ENCODE measurements at regions of chr2 and their contacts with region 1.

Region 1: GRCh38 chr2:230712443-230713330 is at the start of gene CAB39:
- DNase-seq: peak; percentile 93 to 95
- ATAC-seq: peak; percentile 96
- H3K4me3 ChIP-seq: peak within 1 kb of the TSS; percentile 82 to 98
- H3K27ac ChIP-seq: peak within 1 kb of the TSS; percentile 68 to 98
- H3K4me1 ChIP-seq: peaks cover 0 to 1% of the 10 kb centered on the region in 2 donors
- H3K27me3 ChIP-seq: no peaks in the 10 kb centered on the region
- total RNA-seq, gene CAB39: 80.4 to 81.1 TPM

Region 2: GRCh38 chr2:230447455-230448451 is 264.9 kb before region 1 on chr2:
- intact Hi-C with region 1: no loop called
- DNase-seq: no peak
- ATAC-seq: no peak
- H3K4me3 ChIP-seq: no peak overlapping the region
- H3K27ac ChIP-seq: no peak overlapping the region
- H3K4me1 ChIP-seq: peaks cover 0 to 2% of the 10 kb centered on the region in 2 donors
- H3K27me3 ChIP-seq: no peaks in the 10 kb centered on the region

Region 3: DNA sequence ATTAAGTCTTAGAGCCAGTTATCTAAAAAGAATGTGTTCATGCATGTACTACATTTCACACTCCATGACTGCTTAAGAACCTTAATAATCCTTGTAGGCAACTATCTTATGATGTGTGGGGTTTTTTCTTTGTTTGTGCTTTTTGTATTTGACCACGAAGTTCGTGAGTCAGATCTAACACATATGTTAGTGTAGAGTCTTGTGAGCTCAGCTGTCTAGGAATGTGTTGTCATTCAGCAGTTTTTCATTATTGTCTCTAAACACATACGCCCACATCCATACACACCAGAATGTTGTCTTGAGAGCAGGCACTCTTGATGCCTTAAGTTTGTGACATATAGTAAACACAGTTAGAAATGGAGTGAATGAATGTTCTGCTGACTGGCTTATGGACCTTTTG is 38.4 kb after region 1 on chr2:
- intact Hi-C with region 1: loop called (anchors 5 kb)
- DNase-seq: no peak
- ATAC-seq: no peak
- H3K4me3 ChIP-seq: no peak overlapping the region
- H3K27ac ChIP-seq: no peak overlapping the region
- H3K4me1 ChIP-seq: peaks cover 1 to 8% of the 10 kb centered on the region in 2 donors
- H3K27me3 ChIP-seq: no peaks in the 10 kb centered on the region

Region 4: GRCh38 chr2:230758566-230759480 is 46.1 kb after region 1 on chr2:
- intact Hi-C with region 1: loop called (anchors 5 kb)
- DNase-seq: no peak
- ATAC-seq: no peak
- H3K4me3 ChIP-seq: no peak overlapping the region
- H3K27ac ChIP-seq: peak overlapping the region in 1 of 2 donors; percentile 41
- H3K4me1 ChIP-seq: peaks cover 3 to 8% of the 10 kb centered on the region in 2 donors
- H3K27me3 ChIP-seq: no peaks in the 10 kb centered on the region

Region 5: DNA sequence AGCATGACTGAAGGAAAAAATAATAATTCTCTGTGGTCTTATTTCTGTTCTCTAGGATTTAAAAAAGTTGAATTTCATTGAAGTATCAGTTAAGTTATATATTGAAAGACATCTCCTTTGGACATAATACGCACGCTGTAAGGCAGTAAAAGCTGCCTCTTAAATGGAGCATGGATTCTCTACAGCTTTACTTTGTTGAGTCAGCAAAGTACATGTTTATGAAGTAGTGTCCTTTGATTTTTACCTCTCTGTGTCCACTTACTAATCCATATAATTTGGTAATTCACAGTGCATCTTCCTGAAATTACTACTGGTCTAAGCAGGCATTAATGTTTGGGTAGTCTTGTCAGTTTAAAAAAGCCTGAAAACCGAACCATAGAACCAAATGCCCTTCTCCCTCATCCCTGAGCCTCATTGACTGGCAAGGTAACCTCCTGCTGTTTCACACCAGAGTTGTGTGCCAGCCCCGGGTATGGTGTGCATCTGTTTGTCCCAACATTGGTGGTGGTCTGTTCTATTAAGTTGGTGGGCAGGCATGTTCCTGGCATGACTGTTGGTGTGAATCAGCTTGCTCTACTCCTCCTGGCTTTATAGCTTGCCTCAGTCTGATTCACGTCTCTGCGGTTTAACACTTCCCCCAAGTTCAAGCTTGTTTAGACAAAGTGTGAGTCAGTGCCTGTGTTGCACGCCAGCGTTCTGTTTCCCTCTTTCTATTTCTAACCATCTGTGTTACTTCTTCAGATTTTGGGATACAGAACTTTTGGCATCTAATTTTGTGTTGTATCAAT is 81.1 kb after region 1 on chr2:
- intact Hi-C with region 1: loop called (anchors 2 to 5 kb)
- DNase-seq: peak; percentile 86 to 88
- ATAC-seq: peak; percentile 90
- H3K4me3 ChIP-seq: no peak overlapping the region
- H3K27ac ChIP-seq: peak overlapping the region; percentile 91 to 98
- H3K4me1 ChIP-seq: peaks cover 0 to 10% of the 10 kb centered on the region in 2 donors
- H3K27me3 ChIP-seq: no peaks in the 10 kb centered on the region

Region 6: GRCh38 chr2:230798769-230799399 is 86.2 kb after region 1 on chr2:
- intact Hi-C with region 1: loop called (anchors 2 to 5 kb)
- DNase-seq: no peak
- ATAC-seq: peak; percentile 65
- H3K4me3 ChIP-seq: no peak overlapping the region
- H3K27ac ChIP-seq: no peak overlapping the region
- H3K4me1 ChIP-seq: peaks cover 0 to 6% of the 10 kb centered on the region in 2 donors
- H3K27me3 ChIP-seq: no peaks in the 10 kb centered on the region

Region 7: DNA sequence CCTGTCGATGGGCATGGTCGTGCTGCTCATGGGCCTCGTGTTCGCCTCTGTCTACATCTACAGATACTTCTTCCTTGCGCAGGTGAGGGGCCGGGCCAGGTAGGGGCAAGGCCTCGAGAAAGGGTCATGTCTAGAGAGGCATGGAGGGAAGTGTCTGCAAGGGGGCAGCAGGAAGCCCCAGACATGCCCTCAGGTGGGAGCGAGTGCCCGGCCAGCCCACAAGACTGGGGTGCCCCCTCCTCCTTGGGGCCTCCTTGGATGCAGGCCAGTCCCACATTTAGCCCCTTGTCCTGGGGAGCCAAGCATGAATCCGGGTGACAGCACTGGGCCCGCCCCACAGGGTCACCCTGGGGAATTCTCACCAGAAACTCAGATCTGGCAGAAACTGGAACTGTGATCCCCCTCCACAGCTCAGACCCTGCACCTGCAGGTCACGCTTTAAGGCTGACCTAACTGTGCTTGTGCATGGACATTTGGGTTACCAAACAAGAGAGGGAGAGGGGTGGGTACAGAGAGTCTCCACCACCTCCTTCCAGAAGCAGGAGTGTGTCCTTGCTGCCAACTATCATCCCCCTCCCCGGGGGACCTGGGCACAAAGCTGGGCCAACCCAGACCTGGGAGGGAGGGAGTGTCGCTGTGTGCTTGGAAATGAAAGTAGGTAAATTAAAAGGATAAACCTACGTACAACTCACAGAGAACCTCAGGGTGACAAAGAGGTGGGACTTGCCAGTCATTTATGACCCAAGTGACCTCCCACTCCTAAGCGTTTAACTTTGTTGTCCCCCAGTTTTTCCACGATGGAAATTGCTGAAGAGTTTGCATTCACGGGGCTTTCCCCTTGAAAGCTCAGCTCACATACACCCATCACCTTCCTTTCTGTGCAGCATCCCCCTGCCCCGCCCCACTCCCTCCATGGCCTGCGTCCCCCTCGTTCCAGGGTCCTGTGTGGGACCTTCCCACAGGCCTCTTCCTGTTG is 161.1 kb after region 1 on chr2:
- intact Hi-C with region 1: no loop called
- DNase-seq: peak in 1 of 2 donors; percentile 30
- ATAC-seq: no peak
- H3K4me3 ChIP-seq: no peak overlapping the region
- H3K27ac ChIP-seq: no peak overlapping the region
- H3K4me1 ChIP-seq: peaks cover 0 to 4% of the 10 kb centered on the region in 2 donors
- H3K27me3 ChIP-seq: no peaks in the 10 kb centered on the region